ENCODE measurements at regions of chr1 and their contacts with region 1.

Region 1: DNA sequence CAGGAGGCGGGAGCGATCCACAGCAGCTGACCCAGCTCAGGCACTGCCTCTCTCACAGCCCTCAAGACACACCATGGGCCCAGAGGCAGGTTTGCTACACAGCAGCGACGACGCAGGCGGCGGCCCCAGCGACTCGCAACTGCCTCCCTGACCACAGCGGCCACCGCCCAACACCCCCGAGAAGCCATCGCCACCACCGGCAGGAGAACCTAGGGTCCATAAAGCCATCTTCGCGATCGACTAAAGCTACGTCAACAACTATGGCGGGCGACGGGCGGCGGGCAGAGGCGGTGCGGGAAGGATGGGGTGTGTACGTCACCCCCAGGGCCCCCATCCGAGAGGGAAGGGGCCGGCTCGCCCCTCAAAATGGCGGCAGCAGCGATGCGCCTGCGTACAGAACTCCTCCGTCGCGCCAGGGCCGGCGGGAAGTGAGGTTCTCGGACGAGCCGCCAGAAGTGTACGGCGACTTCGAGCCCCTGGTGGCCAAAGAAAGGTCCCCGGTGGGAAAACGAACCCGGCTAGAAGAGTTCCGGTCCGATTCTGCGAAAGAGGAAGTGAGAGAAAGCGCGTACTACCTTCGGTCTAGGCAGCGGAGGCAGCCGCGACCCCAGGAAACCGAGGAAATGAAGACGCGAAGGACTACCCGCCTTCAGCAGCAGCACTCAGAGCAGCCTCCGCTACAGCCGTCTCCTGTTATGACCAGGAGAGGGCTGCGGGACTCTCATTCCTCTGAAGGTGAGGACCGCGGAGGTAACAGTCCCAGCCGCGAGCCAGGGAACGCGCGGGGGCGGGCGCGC is at the start of gene TOR1AIP1:
- DNase-seq: peak; percentile 97
- ATAC-seq: peak; percentile 79
- H3K4me3 Mint-ChIP-seq: peak within 1 kb of the TSS; percentile 96
- H3K27ac Mint-ChIP-seq: peak within 1 kb of the TSS; percentile 100
- H3K4me1 Mint-ChIP-seq: peaks cover 28% of the 10 kb centered on the region
- H3K27me3 Mint-ChIP-seq: no peaks in the 10 kb centered on the region
- CTCF ChIP-seq: no peak
- total RNA-seq, gene TOR1AIP1: 17.3 to 18.7 TPM (median 17.7 TPM) in 3 replicates

Region 2: DNA sequence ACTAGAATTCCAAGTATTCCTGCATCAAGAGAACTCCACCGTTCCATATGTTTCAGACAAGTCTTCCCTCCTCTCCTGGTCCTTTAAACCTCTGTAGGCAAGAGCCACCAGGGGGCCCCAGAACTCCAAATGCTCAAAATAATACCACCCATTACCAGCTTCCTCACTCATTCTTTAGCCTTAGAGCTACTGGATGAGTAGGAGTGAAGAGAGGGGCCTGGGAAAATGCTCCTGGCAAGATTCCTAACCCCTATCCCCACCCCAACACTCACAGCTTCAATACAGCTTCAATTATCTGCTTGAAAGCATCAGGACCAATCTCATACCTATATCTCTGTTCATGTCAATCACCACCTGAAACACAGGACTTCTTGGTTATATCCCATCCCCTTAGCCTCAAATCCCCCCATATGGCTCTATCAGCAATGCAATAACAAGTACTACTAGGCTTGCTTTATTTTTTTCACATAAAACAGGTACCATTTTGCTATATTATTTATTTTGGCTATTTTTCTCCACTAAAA is 14.6 kb before region 1 on chr1:
- CTCF ChIA-PET with region 1: interaction called, 14 read pairs
- POLR2A ChIA-PET with region 1: interaction called, 6 read pairs
- DNase-seq: peak; percentile 70
- ATAC-seq: peak; percentile 99
- H3K4me3 Mint-ChIP-seq: no peak overlapping the region
- H3K27ac Mint-ChIP-seq: 0 out of 2 replicates have a peak overlapping the region, but pooled peaks have one; percentile 18
- H3K4me1 Mint-ChIP-seq: peaks cover 4% of the 10 kb centered on the region; the same call in 1 of the 2 replicates
- H3K27me3 Mint-ChIP-seq: no peaks in the 10 kb centered on the region
- CTCF ChIP-seq: peak; percentile 45

Region 3: GRCh38 chr1:179954493-179955297 is 72.3 kb after region 1 on chr1 and contains the start of gene CEP350:
- CTCF ChIA-PET with region 1: no interaction called
- POLR2A ChIA-PET with region 1: interaction called, 11 read pairs
- DNase-seq: peak; percentile 98
- ATAC-seq: peak; percentile 97
- H3K4me3 Mint-ChIP-seq: peak within 1 kb of the TSS; percentile 85
- H3K27ac Mint-ChIP-seq: peak within 1 kb of the TSS; percentile 95
- H3K4me1 Mint-ChIP-seq: peaks cover 24% of the 10 kb centered on the region
- H3K27me3 Mint-ChIP-seq: no peaks in the 10 kb centered on the region
- CTCF ChIP-seq: no peak
- total RNA-seq, gene CEP350: 34.2 to 36.7 TPM (median 35.4 TPM) in 3 replicates

Measured in WTC11 (cell line).